ENCODE measurements at regions of chr14 and their contacts with region 1.

Region 1: DNA sequence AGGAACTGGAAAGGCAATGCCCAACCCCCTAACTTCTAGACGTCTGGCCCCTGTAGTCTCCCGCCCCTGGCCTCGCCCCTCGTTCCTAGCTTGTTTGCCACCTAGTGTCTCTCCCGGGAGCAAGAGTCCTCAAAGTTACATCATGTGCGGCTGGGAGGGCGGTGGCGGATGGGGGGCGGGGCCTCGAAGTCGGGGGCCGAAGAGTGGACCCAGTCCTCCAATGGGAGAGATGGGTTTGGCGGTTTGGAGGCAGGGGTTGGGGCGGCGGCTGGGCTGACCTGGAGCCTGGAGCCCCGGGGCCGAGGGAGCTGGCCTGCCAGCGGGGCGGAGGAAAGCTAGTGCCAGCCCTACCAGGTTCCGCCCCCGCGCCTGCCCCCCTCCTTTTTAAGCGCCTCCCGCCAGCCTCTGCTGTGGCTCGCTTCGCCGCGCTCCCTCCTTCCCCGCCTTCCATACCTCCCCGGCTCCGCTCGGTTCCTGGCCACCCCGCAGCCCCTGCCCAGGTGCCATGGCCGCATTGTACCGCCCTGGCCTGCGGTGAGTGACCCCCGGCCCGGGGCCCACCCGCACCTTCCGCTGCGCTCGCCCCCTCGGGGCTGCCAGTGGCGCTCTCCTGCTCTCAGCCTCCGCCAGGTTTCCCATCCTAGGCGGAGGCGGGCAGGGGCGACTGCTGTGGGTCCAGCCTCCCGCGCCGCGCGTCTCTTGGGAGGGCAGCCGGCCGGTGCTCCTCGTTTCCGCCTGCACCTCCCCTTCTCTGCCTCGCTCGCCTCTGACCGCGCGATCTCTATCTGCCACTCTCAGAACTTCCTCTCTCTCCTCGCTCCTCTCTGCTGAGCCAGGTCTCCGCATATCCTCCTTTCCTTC is at the start of gene PCK2:
- DNase-seq: peak; percentile 70
- H3K4me3 Mint-ChIP-seq: peak within 1 kb of the TSS; percentile 100
- H3K27ac Mint-ChIP-seq: peak within 1 kb of the TSS; percentile 97
- H3K4me1 Mint-ChIP-seq: peaks cover 36% of the 10 kb centered on the region
- H3K27me3 Mint-ChIP-seq: no peaks in the 10 kb centered on the region
- total RNA-seq, gene PCK2: 55.0 and 62.8 TPM in 2 replicates

Region 2: DNA sequence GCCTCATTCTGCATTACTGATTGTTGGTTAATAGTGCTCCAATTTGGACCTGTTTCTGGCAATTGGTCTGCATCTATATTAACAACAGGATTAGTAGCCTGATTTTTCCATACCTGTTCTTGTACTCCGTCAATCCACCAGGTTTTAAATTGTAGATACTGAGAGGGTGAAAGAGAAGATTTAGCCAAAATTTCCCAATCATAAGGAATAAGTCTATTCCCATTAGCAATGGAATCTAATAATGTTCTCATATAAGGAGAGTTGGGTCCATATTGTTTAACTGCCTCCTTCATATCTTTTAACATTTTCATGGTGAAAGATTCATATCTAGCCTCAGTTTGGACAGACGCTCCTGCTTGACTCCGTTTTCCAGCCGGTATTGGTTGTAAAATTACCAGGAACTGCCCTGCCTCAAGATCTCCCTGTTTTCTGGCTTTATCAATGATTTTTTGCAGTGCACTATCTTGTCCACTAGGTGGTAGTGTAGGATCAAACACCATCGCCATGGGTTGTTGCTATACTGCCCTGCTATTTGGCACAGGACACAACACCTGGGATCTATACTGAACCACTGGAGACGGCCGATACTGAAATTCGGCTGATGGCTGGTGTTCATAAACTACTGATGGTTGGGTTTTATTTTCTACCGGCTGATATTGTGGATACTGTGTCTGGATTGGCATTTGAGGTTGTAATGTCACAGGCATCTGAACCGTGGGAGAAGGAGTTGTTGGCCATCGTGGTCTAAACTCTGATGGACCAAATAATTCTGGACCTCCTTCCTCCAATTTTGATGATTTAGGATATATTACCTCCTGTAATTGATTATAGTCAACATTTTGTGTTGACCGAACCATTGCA is 80.2 kb before region 1 on chr14:
- intact Hi-C with region 1: loop called (anchors 1 kb)
- DNase-seq: peak; percentile 57
- H3K4me3 Mint-ChIP-seq: no peak overlapping the region
- H3K27ac Mint-ChIP-seq: no peak overlapping the region
- H3K4me1 Mint-ChIP-seq: peaks cover 23% of the 10 kb centered on the region
- H3K27me3 Mint-ChIP-seq: peaks cover 7% of the 10 kb centered on the region

Region 3: GRCh38 chr14:24051789-24052655 is 42.1 kb before region 1 on chr14 and contains the start of gene CARMIL3:
- intact Hi-C with region 1: loop called (anchors 1 kb)
- DNase-seq: peak; percentile 67
- H3K4me3 Mint-ChIP-seq: peak within 1 kb of the TSS; percentile 85
- H3K27ac Mint-ChIP-seq: peak within 1 kb of the TSS; percentile 76
- H3K4me1 Mint-ChIP-seq: peaks cover 22% of the 10 kb centered on the region
- H3K27me3 Mint-ChIP-seq: peaks cover 17% of the 10 kb centered on the region
- total RNA-seq, gene CARMIL3: 3.0 and 3.4 TPM in 2 replicates

Region 4: DNA sequence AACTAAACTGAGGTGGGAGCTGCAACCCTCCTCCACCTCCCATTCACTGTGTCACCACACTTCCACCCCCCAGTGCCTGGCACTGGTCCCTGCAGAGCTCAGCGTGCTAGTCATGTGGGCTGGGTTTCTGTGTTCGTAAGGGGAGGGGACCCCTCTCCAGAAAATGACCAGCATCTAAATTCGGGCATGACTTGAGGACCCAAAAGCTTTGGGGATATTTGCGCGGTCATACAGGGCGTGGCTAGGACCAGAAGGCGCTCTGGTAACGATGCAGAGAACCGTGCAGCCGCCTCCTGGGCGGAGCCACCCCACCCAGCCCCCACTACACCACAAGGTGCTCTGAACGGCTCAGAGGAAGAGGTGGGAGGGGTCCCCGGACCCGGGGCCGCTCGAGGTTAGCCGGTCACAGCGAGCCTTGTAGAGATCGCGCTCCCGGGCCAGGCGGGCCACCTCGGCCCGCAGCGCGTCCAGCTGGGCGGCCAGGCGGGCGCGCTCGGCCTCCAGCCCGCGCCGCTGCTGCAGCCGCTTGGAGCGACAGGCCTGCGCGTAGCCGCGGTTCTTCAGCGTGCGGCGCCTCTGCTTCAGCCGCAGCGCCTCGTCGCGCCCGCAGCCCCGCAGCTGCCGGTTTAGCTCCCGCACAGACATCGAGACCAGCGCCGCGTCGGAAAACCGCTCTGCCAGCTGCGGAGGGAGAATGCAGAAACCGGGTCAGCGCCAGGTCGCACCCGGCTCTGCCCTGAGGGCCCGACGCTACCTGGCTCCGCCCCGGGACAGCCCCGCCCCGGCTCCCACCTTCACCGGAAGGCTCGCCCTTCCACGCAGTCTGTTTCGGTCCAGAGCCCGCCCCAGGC is 13.0 kb before region 1 on chr14:
- intact Hi-C with region 1: loop called (anchors 1 kb)
- DNase-seq: peak; percentile 71
- H3K4me3 Mint-ChIP-seq: peak overlapping the region; percentile 81
- H3K27ac Mint-ChIP-seq: peak overlapping the region; percentile 50
- H3K4me1 Mint-ChIP-seq: peaks cover 17% of the 10 kb centered on the region
- H3K27me3 Mint-ChIP-seq: peaks cover 8% of the 10 kb centered on the region

Region 5: DNA sequence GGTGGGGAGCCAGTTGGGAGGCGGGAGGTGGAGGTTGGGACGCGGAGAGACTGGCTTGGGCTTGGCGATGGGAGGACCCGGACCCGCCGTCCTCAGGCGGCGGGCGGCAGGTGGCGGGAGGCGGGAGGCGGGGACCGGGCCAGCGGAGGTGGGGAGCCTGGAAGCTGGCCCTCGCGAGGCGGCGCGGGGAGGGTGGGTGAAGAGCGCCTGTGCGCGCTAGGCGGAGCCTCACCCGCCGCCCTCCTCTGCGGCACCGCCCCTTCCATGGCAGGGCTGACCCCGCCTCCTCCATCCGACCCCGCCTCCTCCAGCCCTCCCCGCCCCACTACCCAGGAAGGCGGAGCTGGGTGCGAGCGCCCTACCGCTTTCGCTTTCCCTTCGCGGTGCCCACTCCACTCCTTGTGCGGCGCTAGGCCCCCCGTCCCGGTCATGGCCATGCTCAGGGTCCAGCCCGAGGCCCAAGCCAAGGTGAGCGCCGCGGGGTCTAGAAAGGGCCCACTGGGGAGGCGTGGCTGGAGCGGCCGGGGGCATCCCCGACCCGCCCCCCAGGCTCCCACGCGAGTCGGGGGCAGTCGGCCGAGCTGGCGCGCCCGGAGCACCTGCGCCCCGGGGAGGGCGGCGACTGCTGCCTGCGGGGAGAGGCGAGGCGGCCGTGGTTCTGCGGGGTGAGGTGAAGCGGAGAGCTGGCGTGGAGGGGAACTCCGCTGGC is 41.9 kb after region 1 on chr14 and contains the start of gene PSME1:
- intact Hi-C with region 1: loop called (anchors 1 kb)
- DNase-seq: peak; percentile 92
- H3K4me3 Mint-ChIP-seq: peak within 1 kb of the TSS; percentile 92
- H3K27ac Mint-ChIP-seq: peak within 1 kb of the TSS; percentile 90
- H3K4me1 Mint-ChIP-seq: peaks cover 64% of the 10 kb centered on the region
- H3K27me3 Mint-ChIP-seq: no peaks in the 10 kb centered on the region
- total RNA-seq, gene PSME1: 291 and 295 TPM in 2 replicates

Measured in activated T-helper 1 cell treated with anti-CD3 and anti-CD28 coated beads, Interleukin-12 subunit alpha, Interleukin-12 subunit beta, Interleukin-2, Interleukin-4 antibody, amounts not matched to agents 30 ng/mL and 10 ng/mL and 1 ng/mL, durations not matched to agents 14 hours and 24 hours and 36 hours (primary cell).